ENCODE measurements at regions of chr9 and their contacts with region 1.

Region 1: GRCh38 chr9:126490871-126491567 is 122.7 kb upstream of the LMX1B start:
- DNase-seq: peak; percentile 61
- H3K4me3 Mint-ChIP-seq: no peak overlapping the region
- H3K27ac Mint-ChIP-seq: no peak overlapping the region
- H3K4me1 Mint-ChIP-seq: peaks cover 3% of the 10 kb centered on the region
- H3K27me3 Mint-ChIP-seq: peaks cover 9% of the 10 kb centered on the region

Region 2: DNA sequence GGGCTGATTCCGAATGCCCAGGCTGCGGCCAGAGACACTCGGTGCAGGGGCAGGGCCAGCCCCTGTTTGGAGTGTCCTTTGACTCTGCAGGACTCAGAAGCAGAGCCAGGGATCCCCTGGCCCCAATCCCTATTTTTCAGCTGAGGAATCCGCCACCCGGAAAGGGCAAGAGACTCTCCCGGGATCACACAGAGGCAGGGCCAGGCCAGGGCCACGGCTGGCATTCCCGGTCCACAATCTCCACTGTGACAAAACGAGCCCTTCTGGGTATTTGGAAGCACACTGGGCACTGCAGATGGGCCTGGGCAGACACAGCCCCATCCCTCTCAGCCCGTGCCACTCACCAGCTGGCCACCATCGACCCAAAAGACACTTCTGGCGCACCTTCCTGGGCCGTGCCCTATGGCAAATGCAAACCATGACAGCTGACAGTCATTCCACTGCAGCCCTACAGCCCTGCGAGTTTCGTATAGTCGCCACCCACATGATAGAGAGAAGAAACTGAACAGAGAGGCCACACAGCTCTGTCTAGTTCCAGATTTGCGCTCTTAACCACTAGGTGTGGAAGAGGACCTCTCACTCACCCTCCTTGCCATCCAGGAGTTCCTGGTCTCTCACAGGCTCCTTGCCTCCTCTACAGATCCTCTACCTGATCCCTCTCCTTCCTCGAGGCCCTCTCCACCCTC is 1997.1 kb before region 1 on chr9:
- CTCF ChIA-PET with region 1: no interaction called
- POLR2A ChIA-PET with region 1: no interaction called
- intact Hi-C with region 1: no loop called
- DNase-seq: no peak
- H3K4me3 Mint-ChIP-seq: no peak overlapping the region
- H3K27ac Mint-ChIP-seq: no peak overlapping the region
- H3K4me1 Mint-ChIP-seq: peaks cover 4% of the 10 kb centered on the region
- H3K27me3 Mint-ChIP-seq: no peaks in the 10 kb centered on the region

Region 3: GRCh38 chr9:125407974-125408900 is 1082.8 kb before region 1 on chr9:
- CTCF ChIA-PET with region 1: interaction called, 17 read pairs
- POLR2A ChIA-PET with region 1: no interaction called
- intact Hi-C with region 1: loop called (anchors 5 kb)
- DNase-seq: peak; percentile 82
- H3K4me3 Mint-ChIP-seq: peak overlapping the region; percentile 52
- H3K27ac Mint-ChIP-seq: no peak overlapping the region
- H3K4me1 Mint-ChIP-seq: peaks cover 10% of the 10 kb centered on the region
- H3K27me3 Mint-ChIP-seq: peaks cover 24% of the 10 kb centered on the region

Region 4: DNA sequence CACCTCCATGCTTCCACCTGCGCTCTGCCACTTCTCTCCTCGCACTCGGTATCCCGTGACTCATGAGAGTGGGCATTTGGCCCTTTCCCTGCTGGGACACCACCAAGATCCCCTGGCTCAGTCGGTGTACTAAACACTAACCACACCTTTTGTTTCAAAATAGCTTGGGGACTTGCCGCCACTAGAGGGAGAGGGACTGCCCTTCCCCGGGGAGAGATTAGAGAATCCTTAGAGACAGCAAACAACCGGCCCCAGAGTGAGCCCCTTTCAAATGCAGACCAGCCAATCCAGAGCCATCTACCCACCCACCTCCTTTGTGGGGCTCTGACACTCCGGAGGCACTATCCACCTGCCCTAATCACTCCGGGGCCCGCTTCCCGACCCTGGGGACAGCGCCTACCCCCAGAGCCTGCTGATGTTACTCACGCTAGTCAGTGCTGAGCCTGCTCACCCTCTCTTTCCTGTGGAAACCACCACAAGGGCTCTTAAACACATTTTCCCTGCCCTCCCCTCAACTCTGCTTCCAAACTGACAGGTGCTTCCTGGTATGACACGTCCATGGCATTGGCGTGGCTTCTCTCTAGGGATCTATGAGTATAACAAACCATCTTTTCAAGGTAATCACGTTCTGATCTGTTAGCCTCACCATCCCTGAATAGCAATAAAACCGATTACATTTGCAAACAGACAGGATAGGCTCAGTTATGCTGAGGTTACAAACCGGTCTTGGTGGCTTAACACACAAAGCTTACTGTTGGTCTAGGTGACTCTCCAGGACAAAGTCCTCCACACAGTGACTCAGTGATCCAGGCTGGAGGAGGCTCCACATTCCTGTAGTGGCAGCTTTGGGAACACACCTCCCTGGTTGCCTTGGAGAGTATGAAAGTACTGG is 344.5 kb before region 1 on chr9:
- CTCF ChIA-PET with region 1: no interaction called
- POLR2A ChIA-PET with region 1: no interaction called
- intact Hi-C with region 1: loop called (anchors 10 kb)
- DNase-seq: peak; percentile 30
- H3K4me3 Mint-ChIP-seq: no peak overlapping the region
- H3K27ac Mint-ChIP-seq: no peak overlapping the region
- H3K4me1 Mint-ChIP-seq: peaks cover 2% of the 10 kb centered on the region
- H3K27me3 Mint-ChIP-seq: peaks cover 25% of the 10 kb centered on the region

Region 5: DNA sequence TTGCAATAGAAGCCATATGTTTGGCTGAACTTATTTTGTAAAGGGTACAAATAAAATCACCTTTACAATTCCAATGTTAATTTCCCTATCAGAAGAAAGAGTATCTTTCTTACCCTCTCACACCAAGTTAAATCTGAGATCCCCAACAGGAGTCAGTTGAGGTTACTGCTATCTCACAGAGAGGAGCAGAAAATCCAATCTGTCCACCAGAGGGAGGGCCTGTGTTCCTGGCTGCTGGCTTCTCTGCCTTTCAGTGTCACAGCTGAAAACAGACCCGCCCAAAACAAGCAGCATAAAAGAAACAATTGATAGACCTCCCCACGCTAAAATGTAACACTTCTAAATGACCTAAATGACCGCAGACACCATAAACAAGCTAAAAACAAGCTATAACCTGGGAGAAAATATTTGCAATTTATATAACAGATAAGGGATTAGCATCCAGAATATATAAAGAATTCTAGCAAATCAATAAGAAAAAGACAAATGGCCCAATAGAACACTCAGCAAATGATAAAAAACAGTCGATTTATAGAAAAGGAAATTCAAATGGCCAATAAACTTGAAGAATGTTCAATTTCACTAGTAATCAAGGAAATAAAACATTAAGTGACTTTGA is 188.9 kb before region 1 on chr9:
- CTCF ChIA-PET with region 1: interaction called, 40 read pairs
- POLR2A ChIA-PET with region 1: no interaction called
- intact Hi-C with region 1: loop called (anchors 1 kb)
- DNase-seq: peak; percentile 50
- H3K4me3 Mint-ChIP-seq: no peak overlapping the region
- H3K27ac Mint-ChIP-seq: no peak overlapping the region
- H3K4me1 Mint-ChIP-seq: peaks cover 2% of the 10 kb centered on the region
- H3K27me3 Mint-ChIP-seq: no peaks in the 10 kb centered on the region

Region 6: DNA sequence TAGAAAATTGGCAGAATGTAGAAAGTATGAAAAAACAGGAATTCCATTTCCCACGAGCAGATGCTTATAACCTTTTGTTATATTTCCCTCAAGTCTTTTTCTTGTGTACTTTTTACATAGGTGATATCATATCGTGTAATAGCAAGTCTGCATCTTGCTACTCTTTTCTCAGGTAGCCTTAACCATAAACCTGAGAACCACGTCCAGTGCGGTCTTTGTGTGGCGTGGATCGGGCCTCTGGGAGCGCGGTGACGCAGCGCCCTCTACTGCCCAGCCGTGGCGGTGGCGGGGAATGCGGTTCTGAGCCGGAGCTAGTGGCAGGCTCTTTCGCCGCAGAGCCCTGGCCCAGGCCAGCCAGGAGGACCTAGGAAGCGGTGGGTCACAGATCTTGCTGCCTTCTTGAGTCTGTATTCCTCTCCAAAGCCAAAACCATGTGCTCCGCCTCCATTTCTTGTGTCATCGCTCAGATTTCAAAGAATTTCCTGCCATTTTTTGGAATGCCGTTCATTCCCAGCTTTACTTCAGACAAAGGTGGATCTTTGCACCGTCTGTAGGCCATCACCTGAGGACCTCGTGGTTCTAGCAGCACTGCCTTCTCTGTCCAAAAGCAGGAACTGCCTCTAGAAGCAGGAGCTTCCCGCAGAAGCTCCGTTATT is 92.5 kb before region 1 on chr9:
- CTCF ChIA-PET with region 1: interaction called, 43 read pairs
- POLR2A ChIA-PET with region 1: no interaction called
- intact Hi-C with region 1: loop called (anchors 5 kb)
- DNase-seq: peak; percentile 82
- H3K4me3 Mint-ChIP-seq: no peak overlapping the region
- H3K27ac Mint-ChIP-seq: no peak overlapping the region
- H3K4me1 Mint-ChIP-seq: peaks cover 37% of the 10 kb centered on the region
- H3K27me3 Mint-ChIP-seq: no peaks in the 10 kb centered on the region

Region 7: DNA sequence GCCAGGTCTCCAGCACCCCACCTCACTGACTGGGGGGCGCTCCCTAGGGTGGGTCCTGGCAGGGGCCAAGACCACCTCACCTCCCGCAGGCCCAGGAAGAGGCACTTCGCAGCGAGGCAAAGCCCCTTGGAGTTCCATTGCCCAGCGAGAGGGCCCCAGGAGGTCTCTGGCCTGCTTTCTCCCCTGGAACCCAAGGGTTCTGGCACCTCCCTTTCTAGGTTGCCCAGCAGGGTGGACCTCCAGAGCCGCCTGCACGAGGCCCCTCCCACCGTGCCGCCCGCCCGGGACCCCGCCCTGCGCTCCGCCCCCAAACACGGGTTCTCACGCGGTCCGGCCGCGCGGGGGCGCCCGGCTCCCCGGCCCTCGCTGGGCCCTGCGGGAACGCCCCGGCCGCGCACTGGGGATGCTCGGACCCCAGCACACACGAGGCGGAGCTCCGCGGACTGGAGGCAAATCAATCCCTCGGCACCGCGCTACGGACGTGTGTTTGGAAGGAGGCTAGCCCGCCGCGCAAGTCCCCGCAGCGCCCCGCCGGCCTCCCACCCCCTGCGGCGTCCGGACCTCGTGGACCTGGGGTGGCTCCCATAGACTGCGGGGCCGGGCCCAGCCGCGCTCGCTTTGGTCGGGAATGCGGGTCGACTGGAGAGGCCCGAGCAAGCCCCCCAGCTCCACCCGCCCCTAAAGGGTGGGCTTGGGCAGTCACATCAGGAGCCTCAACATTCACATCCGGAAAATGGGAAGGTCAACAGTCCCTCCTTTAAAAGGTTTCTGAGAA is 23.2 kb after region 1 on chr9:
- CTCF ChIA-PET with region 1: interaction called, 12 read pairs
- POLR2A ChIA-PET with region 1: no interaction called
- intact Hi-C with region 1: no loop called
- DNase-seq: peak; percentile 67
- H3K4me3 Mint-ChIP-seq: no peak overlapping the region
- H3K27ac Mint-ChIP-seq: no peak overlapping the region
- H3K4me1 Mint-ChIP-seq: peaks cover 31% of the 10 kb centered on the region
- H3K27me3 Mint-ChIP-seq: peaks cover 59% of the 10 kb centered on the region